Activated CD4-positive, alpha-beta T cell treated with anti-CD3 and anti-CD28 coated beads for 36 hours (primary cell): ENCODE measurements at regions of chr1 and their contacts with region 1.

Region 1: DNA sequence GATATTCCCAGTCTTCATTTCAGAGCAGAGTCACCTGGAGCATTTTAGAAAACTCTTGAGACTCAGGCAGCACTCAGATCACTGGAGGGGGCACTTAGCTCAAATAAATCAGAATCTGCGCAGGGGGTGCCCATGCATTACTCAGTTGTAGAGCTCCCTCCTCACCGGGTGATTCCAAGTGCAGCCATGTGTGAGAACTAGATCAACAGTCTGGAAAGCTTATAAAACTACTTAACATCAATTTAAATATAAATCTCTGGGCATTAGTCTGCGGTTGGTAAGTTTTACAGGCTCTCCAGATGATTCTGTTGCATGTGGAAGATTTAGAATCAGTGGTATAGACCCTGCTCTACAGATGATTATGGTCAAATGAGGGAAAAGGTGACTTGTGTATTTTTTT is 128.6 kb downstream of the ST6GALNAC3 start:
- DNase-seq: no peak
- ATAC-seq: no peak
- H3K4me3 Mint-ChIP-seq: no peak overlapping the region
- H3K27ac Mint-ChIP-seq: no peak overlapping the region
- H3K4me1 Mint-ChIP-seq: no peaks in the 10 kb centered on the region
- H3K27me3 Mint-ChIP-seq: no peaks in the 10 kb centered on the region

Region 2: GRCh38 chr1:76190749-76191424 is 12.2 kb before region 1 on chr1:
- CTCF ChIA-PET with region 1: interaction called, 3 read pairs
- POLR2A ChIA-PET with region 1: interaction called, 15 read pairs
- intact Hi-C with region 1: no loop called
- DNase-seq: no peak
- ATAC-seq: no peak
- H3K4me3 Mint-ChIP-seq: no peak overlapping the region
- H3K27ac Mint-ChIP-seq: no peak overlapping the region
- H3K4me1 Mint-ChIP-seq: no peaks in the 10 kb centered on the region
- H3K27me3 Mint-ChIP-seq: no peaks in the 10 kb centered on the region